CD4-positive, alpha-beta memory T cell (primary cell): ENCODE measurements at regions of chr14 and their contacts with region 1.

Region 1: GRCh38 chr14:22872033-22872832 is 693 bp downstream of the LRP10 start:
- DNase-seq: peak; percentile 66 to 78 (median 73)
- H3K4me3 ChIP-seq: peak overlapping the region; percentile 24 to 55
- H3K4me3 Mint-ChIP-seq: peak overlapping the region; percentile 88 to 98 (median 97)
- H3K27ac ChIP-seq: peak overlapping the region; percentile 79
- H3K27ac Mint-ChIP-seq: peak overlapping the region; percentile 72 to 100 (median 89)
- H3K4me1 ChIP-seq: peaks cover 48% of the 10 kb centered on the region
- H3K4me1 Mint-ChIP-seq: peaks cover 17 to 46% (median 33%) of the 10 kb centered on the region in 4 donors
- H3K27me3 ChIP-seq: no peaks in the 10 kb centered on the region
- H3K27me3 Mint-ChIP-seq: no peaks in the 10 kb centered on the region

Region 2: GRCh38 chr14:22822571-22823098 is 49.6 kb before region 1 on chr14:
- CTCF ChIA-PET with region 1: interaction called, 38 read pairs
- POLR2A ChIA-PET with region 1: interaction called, 3 read pairs
- intact Hi-C with region 1: no loop called
- DNase-seq: peak; percentile 63 to 70 (median 66)
- H3K4me3 ChIP-seq: peak overlapping the region in 1 of 2 donors; percentile 27
- H3K4me3 Mint-ChIP-seq: peak overlapping the region; percentile 20 to 77 (median 66)
- H3K27ac ChIP-seq: no peak overlapping the region
- H3K27ac Mint-ChIP-seq: peak overlapping the region in 2 of 7 donors; percentile 19 to 43
- H3K4me1 ChIP-seq: peaks cover 7% of the 10 kb centered on the region
- H3K4me1 Mint-ChIP-seq: peaks cover 6 to 22% (median 12%) of the 10 kb centered on the region in 4 donors
- H3K27me3 ChIP-seq: no peaks in the 10 kb centered on the region
- H3K27me3 Mint-ChIP-seq: peaks cover 6 to 16% of the 10 kb centered on the region in 2 donors

Region 3: GRCh38 chr14:22886500-22887259 is 14.4 kb after region 1 on chr14:
- CTCF ChIA-PET with region 1: interaction called, 191 read pairs
- POLR2A ChIA-PET with region 1: interaction called, 208 read pairs
- intact Hi-C with region 1: loop called (anchors 1 kb)
- DNase-seq: peak; percentile 73 to 85 (median 78)
- H3K4me3 ChIP-seq: peak overlapping the region; percentile 24 to 30
- H3K4me3 Mint-ChIP-seq: peak overlapping the region; percentile 87 to 97 (median 94)
- H3K27ac ChIP-seq: peak overlapping the region; percentile 68
- H3K27ac Mint-ChIP-seq: peak overlapping the region; percentile 93 to 99 (median 97)
- H3K4me1 ChIP-seq: peaks cover 57% of the 10 kb centered on the region
- H3K4me1 Mint-ChIP-seq: peaks cover 34 to 85% (median 59%) of the 10 kb centered on the region in 4 donors
- H3K27me3 ChIP-seq: no peaks in the 10 kb centered on the region
- H3K27me3 Mint-ChIP-seq: no peaks in the 10 kb centered on the region

Region 4: GRCh38 chr14:22918804-22919600 is 46.8 kb after region 1 on chr14 and contains the start of gene RBM23:
- CTCF ChIA-PET with region 1: interaction called, 33 read pairs
- POLR2A ChIA-PET with region 1: interaction called, 36 read pairs
- intact Hi-C with region 1: loop called (anchors 1 kb)
- DNase-seq: peak; percentile 99 to 100 (median 100)
- H3K4me3 ChIP-seq: peak within 1 kb of the TSS; percentile 67 to 93
- H3K4me3 Mint-ChIP-seq: peak within 1 kb of the TSS; percentile 94 to 99 (median 96)
- H3K27ac ChIP-seq: peak within 1 kb of the TSS; percentile 98
- H3K27ac Mint-ChIP-seq: peak within 1 kb of the TSS; percentile 99 to 100 (median 100)
- H3K4me1 ChIP-seq: peaks cover 40% of the 10 kb centered on the region
- H3K4me1 Mint-ChIP-seq: peaks cover 13 to 56% (median 33%) of the 10 kb centered on the region in 4 donors
- H3K27me3 ChIP-seq: no peaks in the 10 kb centered on the region
- H3K27me3 Mint-ChIP-seq: peaks cover 0 to 4% of the 10 kb centered on the region in 2 donors
- total RNA-seq, gene RBM23: 119 to 123 TPM

Region 5: GRCh38 chr14:23025151-23025814 is 153.1 kb after region 1 on chr14:
- CTCF ChIA-PET with region 1: no interaction called
- POLR2A ChIA-PET with region 1: no interaction called
- intact Hi-C with region 1: no loop called
- DNase-seq: no peak
- H3K4me3 ChIP-seq: no peak overlapping the region
- H3K4me3 Mint-ChIP-seq: peak overlapping the region in 3 of 8 donors; percentile 49 to 62 (median 60)
- H3K27ac ChIP-seq: no peak overlapping the region
- H3K27ac Mint-ChIP-seq: peak overlapping the region in 5 of 7 donors; percentile 19 to 68 (median 61)
- H3K4me1 ChIP-seq: peaks cover 46% of the 10 kb centered on the region
- H3K4me1 Mint-ChIP-seq: peaks cover 32 to 53% (median 41%) of the 10 kb centered on the region in 4 donors
- H3K27me3 ChIP-seq: no peaks in the 10 kb centered on the region
- H3K27me3 Mint-ChIP-seq: no peaks in the 10 kb centered on the region